ENCODE measurements at regions of chr3 and their contacts with region 1.

Region 1: GRCh38 chr3:176939022-176939817 is 258.1 kb downstream of the TBL1XR1 start:
- DNase-seq: peak; percentile 39 to 62 (median 54)
- H3K4me3 ChIP-seq: no peak overlapping the region
- H3K27ac ChIP-seq: no peak overlapping the region
- H3K4me1 ChIP-seq: peaks cover 0 to 4% of the 10 kb centered on the region in 2 donors
- H3K27me3 ChIP-seq: no peaks in the 10 kb centered on the region
- CTCF ChIP-seq: peak; percentile 59 to 84 (median 79)
- POLR2A ChIP-seq: no peak

Region 2: GRCh38 chr3:176776622-176777175 is 162.5 kb before region 1 on chr3:
- intact Hi-C with region 1: no loop called
- DNase-seq: no peak
- H3K4me3 ChIP-seq: no peak overlapping the region
- H3K27ac ChIP-seq: no peak overlapping the region
- H3K4me1 ChIP-seq: no peaks in the 10 kb centered on the region
- H3K27me3 ChIP-seq: no peaks in the 10 kb centered on the region
- CTCF ChIP-seq: no peak
- POLR2A ChIP-seq: no peak

Region 3: DNA sequence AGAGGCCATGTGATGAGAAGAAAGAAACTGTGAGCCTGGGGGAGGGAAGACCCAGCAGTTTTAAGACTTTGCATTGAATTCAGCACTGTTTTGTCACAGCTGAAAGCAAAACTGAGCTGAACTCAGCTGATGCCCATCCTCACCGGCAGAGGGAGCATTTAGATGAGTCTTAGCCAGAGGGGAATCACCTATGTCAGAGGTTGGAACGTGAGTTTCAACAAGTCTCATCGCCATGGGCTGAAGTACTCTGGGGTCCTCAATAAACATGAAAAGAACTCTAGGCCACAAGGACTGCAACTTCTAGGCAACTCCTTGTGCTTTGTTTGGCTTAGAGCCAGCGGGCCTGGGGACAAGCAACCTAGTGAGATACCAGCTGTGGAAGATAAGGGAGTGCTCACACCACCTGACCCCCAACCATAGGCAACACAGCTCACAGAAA is 66.4 kb before region 1 on chr3:
- intact Hi-C with region 1: loop called (anchors 5 to 10 kb)
- DNase-seq: peak; percentile 40 to 69 (median 57)
- H3K4me3 ChIP-seq: no peak overlapping the region
- H3K27ac ChIP-seq: no peak overlapping the region
- H3K4me1 ChIP-seq: no peaks in the 10 kb centered on the region
- H3K27me3 ChIP-seq: no peaks in the 10 kb centered on the region
- CTCF ChIP-seq: peak; percentile 63 to 80 (median 75)
- POLR2A ChIP-seq: no peak

Region 4: GRCh38 chr3:176879710-176880109 is 59.5 kb before region 1 on chr3:
- intact Hi-C with region 1: loop called (anchors 5 to 10 kb)
- DNase-seq: no peak
- H3K4me3 ChIP-seq: no peak overlapping the region
- H3K27ac ChIP-seq: no peak overlapping the region
- H3K4me1 ChIP-seq: no peaks in the 10 kb centered on the region
- H3K27me3 ChIP-seq: no peaks in the 10 kb centered on the region
- CTCF ChIP-seq: no peak
- POLR2A ChIP-seq: no peak

Measured in adrenal gland (tissue), 19 donors.